ENCODE measurements at regions of chr21 and their contacts with region 1.

Region 1: GRCh38 chr21:34888569-34889319 is 160.4 kb downstream of the RUNX1 start:
- DNase-seq: peak; percentile 63 to 81 (median 74)
- H3K4me3 ChIP-seq: peak overlapping the region; percentile 78
- H3K4me3 Mint-ChIP-seq: peak overlapping the region; percentile 88 to 99 (median 95)
- H3K27ac ChIP-seq: peak overlapping the region; percentile 87
- H3K27ac Mint-ChIP-seq: peak overlapping the region; percentile 88 to 99 (median 98)
- H3K4me1 ChIP-seq: peaks cover 51% of the 10 kb centered on the region
- H3K4me1 Mint-ChIP-seq: peaks cover 44 to 68% (median 63%) of the 10 kb centered on the region in 3 donors
- H3K27me3 ChIP-seq: no peaks in the 10 kb centered on the region
- H3K27me3 Mint-ChIP-seq: peaks cover 0 to 7% of the 10 kb centered on the region in 2 donors

Region 2: DNA sequence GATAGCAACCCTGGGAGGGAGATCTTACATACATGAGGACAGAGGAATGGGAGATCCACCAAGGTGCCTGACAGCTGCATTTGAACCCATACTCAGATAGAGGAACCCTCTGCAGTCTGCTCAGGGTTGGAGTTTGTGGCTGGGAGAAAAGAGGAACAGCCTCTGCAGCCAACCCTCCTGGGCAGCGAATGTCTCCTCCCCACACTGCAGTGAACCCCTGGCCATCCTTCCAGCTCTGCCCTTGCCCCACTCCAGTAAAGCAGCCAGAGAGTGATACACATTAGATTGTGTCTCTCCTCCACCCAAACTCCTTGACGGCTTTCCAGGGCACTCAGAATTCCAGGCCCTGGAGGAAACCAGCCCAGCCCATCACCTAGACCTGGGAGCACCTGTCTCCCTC is 22.6 kb after region 1 on chr21:
- CTCF ChIA-PET with region 1: interaction called, 11 read pairs
- POLR2A ChIA-PET with region 1: no interaction called
- DNase-seq: no peak
- H3K4me3 ChIP-seq: no peak overlapping the region
- H3K4me3 Mint-ChIP-seq: peak overlapping the region in 1 of 7 donors; percentile 78
- H3K27ac ChIP-seq: no peak overlapping the region
- H3K27ac Mint-ChIP-seq: peak overlapping the region in 5 of 8 donors; percentile 16 to 82 (median 56)
- H3K4me1 ChIP-seq: peaks cover 55% of the 10 kb centered on the region
- H3K4me1 Mint-ChIP-seq: peaks cover 72 to 97% (median 95%) of the 10 kb centered on the region in 3 donors
- H3K27me3 ChIP-seq: no peaks in the 10 kb centered on the region
- H3K27me3 Mint-ChIP-seq: peaks cover 0 to 3% of the 10 kb centered on the region in 2 donors

Region 3: DNA sequence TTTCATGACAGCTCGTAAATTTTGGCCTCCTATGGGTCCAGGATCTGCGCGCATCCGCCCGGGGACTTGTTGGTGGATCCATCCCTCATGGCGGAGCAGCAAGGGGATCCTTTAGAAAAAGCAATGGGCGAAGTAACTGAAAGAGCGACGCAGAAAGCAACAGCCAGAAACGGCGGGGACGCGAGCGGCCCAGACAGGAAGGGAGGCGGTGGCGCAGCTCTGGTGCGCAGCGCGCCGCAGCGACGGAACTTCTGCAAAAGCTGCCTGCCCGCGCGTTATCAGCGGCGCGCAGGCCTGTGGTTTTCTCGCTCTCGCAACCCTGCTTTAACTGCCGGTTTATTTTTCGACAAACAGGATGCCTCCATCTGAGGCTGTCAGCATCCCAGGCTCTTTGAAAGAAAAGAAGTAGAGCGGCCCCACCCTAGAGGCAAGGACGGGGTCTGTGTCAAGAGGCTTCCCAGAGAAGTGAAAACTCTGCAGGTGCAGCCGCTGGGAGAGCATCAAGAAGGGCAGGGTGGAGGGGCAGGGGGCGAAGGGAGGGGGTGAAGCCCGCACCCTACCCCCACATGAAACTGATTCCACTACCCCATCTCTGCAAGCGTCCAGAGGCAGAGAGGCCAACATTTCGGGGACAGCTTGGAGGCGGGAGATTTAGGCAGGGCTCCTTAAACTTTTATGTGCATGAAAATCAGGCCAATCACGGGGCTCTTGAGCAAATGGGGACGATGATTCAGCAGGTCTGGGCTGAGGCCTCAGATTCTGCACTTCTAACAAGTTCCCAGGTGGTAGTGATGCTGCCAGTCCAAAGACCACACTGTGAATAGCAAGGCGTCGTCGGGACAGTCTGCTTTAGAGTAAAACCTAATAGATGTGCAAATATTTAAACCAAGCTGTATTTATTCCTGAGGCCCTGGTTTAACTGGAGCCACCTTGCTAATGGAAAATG is 138.1 kb after region 1 on chr21:
- CTCF ChIA-PET with region 1: interaction called, 15 read pairs
- POLR2A ChIA-PET with region 1: interaction called, 7 read pairs
- DNase-seq: peak; percentile 73 to 91 (median 90)
- H3K4me3 ChIP-seq: peak overlapping the region; percentile 35
- H3K4me3 Mint-ChIP-seq: peak overlapping the region; percentile 83 to 94 (median 86)
- H3K27ac ChIP-seq: peak overlapping the region; percentile 76
- H3K27ac Mint-ChIP-seq: peak overlapping the region; percentile 96 to 100 (median 100)
- H3K4me1 ChIP-seq: peaks cover 90% of the 10 kb centered on the region
- H3K4me1 Mint-ChIP-seq: peaks cover 85 to 97% (median 95%) of the 10 kb centered on the region in 3 donors
- H3K27me3 ChIP-seq: no peaks in the 10 kb centered on the region
- H3K27me3 Mint-ChIP-seq: no peaks in the 10 kb centered on the region

Region 4: GRCh38 chr21:35051287-35051818 is 162.6 kb after region 1 on chr21:
- CTCF ChIA-PET with region 1: interaction called, 83 read pairs
- POLR2A ChIA-PET with region 1: interaction called, 21 read pairs
- DNase-seq: peak; percentile 69 to 89 (median 81)
- H3K4me3 ChIP-seq: peak overlapping the region; percentile 2
- H3K4me3 Mint-ChIP-seq: peak overlapping the region; percentile 52 to 98 (median 97)
- H3K27ac ChIP-seq: peak overlapping the region; percentile 4
- H3K27ac Mint-ChIP-seq: peak overlapping the region; percentile 92 to 98 (median 97)
- H3K4me1 ChIP-seq: peaks cover 43% of the 10 kb centered on the region
- H3K4me1 Mint-ChIP-seq: peaks cover 43 to 48% (median 47%) of the 10 kb centered on the region in 3 donors
- H3K27me3 ChIP-seq: no peaks in the 10 kb centered on the region
- H3K27me3 Mint-ChIP-seq: peaks cover 0 to 20% of the 10 kb centered on the region in 2 donors